MCF 10A (cell line): ENCODE measurements at regions of chr15 and their contacts with region 1.

Region 1: GRCh38 chr15:68277603-68278344 is at the start of gene FEM1B:
- DNase-seq: peak; percentile 92
- H3K4me3 Mint-ChIP-seq: peak within 1 kb of the TSS; percentile 85
- H3K27ac Mint-ChIP-seq: peak within 1 kb of the TSS; percentile 99
- H3K4me1 Mint-ChIP-seq: peaks cover 55% of the 10 kb centered on the region
- H3K27me3 Mint-ChIP-seq: no peaks in the 10 kb centered on the region
- CTCF ChIP-seq: no peak
- total RNA-seq, gene FEM1B: 50.7 and 70.2 TPM in 2 replicates

Region 2: GRCh38 chr15:68229386-68230156 is 48.2 kb before region 1 on chr15 and contains the start of gene CLN6:
- CTCF ChIA-PET with region 1: no interaction called
- POLR2A ChIA-PET with region 1: interaction called, 49 read pairs
- intact Hi-C with region 1: no loop called
- DNase-seq: peak; percentile 78
- H3K4me3 Mint-ChIP-seq: peak within 1 kb of the TSS; percentile 74
- H3K27ac Mint-ChIP-seq: peak within 1 kb of the TSS; percentile 81
- H3K4me1 Mint-ChIP-seq: peaks cover 28% of the 10 kb centered on the region
- H3K27me3 Mint-ChIP-seq: no peaks in the 10 kb centered on the region
- CTCF ChIP-seq: no peak
- total RNA-seq, gene CLN6: 26.5 and 31.4 TPM in 2 replicates

Region 3: DNA sequence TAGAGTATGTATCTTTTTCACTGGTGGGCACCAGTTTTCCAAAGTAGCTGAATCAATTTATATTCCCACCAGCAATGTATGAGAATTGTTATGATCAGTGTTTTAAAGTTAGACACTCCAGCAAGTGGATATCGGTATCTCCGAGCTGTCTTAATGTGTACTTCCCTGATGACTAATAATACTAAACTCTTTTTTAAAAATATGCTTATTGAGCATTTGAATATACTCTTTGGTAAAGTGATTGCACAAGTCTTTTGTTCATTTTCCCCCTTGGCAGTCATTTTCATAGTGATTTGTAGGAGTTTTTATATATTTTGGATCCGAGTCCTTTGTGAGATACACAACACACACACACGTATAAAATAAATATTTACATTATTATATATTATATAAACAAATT is 12.7 kb before region 1 on chr15:
- CTCF ChIA-PET with region 1: interaction called, 5 read pairs
- POLR2A ChIA-PET with region 1: interaction called, 391 read pairs
- intact Hi-C with region 1: no loop called
- DNase-seq: no peak
- H3K4me3 Mint-ChIP-seq: no peak overlapping the region
- H3K27ac Mint-ChIP-seq: no peak overlapping the region
- H3K4me1 Mint-ChIP-seq: peaks cover 13% of the 10 kb centered on the region
- H3K27me3 Mint-ChIP-seq: no peaks in the 10 kb centered on the region
- CTCF ChIP-seq: no peak

Region 4: GRCh38 chr15:68298882-68299381 is 21.2 kb after region 1 on chr15:
- CTCF ChIA-PET with region 1: interaction called, 3 read pairs
- POLR2A ChIA-PET with region 1: interaction called, 415 read pairs
- intact Hi-C with region 1: no loop called
- DNase-seq: no peak
- H3K4me3 Mint-ChIP-seq: no peak overlapping the region
- H3K27ac Mint-ChIP-seq: no peak overlapping the region
- H3K4me1 Mint-ChIP-seq: peaks cover 14% of the 10 kb centered on the region
- H3K27me3 Mint-ChIP-seq: no peaks in the 10 kb centered on the region
- CTCF ChIP-seq: no peak

Region 5: DNA sequence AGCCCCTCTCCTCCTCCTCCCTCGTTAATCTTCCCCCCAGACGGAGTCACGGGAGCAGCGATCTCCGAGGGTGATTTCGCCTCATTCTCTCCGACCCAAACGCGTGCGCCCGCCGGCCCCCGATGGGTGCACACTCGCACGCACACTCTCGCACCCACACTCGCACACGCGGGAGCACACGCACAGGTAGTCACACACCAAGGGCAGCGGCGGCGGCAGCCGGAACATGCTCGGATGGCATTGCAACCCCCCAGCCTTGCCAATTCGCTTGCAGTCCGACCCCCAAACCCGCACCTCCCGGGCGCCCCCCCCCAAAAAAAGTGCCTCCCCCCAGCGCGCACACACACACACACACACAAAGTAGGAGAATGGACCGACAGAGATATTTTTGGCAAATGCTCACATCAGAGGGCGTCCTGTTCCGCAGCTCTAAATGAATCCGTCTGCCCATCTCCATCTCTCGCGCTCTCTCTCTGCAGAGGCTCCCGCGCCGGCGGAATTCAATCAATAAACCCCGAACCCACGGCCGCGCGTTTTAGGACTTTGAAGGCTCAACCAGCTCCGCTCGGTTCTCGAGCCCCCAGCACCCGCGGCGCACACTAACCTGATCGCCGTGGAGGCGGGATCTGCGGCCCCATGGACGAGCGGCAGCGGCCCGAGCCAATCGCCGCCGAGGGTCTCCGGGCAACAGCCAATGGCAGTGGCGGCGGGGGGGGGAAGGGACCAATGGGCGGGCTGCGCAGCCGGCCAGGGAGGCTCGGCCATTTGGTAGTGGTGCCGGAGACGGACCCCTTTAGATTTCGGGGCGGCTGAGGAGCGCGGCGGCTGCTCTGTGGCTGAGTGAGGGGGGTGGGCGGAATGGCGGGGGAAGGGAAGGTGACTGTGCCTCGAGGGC is 542.8 kb after region 1 on chr15 and contains the start of gene ANP32A:
- CTCF ChIA-PET with region 1: no interaction called
- POLR2A ChIA-PET with region 1: interaction called, 16 read pairs
- intact Hi-C with region 1: no loop called
- DNase-seq: peak; percentile 94
- H3K4me3 Mint-ChIP-seq: peak within 1 kb of the TSS; percentile 96
- H3K27ac Mint-ChIP-seq: peak within 1 kb of the TSS; percentile 96
- H3K4me1 Mint-ChIP-seq: peaks cover 26% of the 10 kb centered on the region
- H3K27me3 Mint-ChIP-seq: no peaks in the 10 kb centered on the region
- CTCF ChIP-seq: no peak
- total RNA-seq, gene ANP32A: 150 and 159 TPM in 2 replicates